Posterior cingulate gyrus (tissue), 11 donors: ENCODE measurements at regions of chr16 and their contacts with region 1.

Region 1: GRCh38 chr16:49491771-49492761 is 118.5 kb downstream of the C16orf78 start:
- DNase-seq: peak in 9 of 10 donors; percentile 30 to 93 (median 60)

Region 2: GRCh38 chr16:49194537-49195236 is 297.4 kb before region 1 on chr16:
- intact Hi-C with region 1: no loop called
- DNase-seq: no peak

Region 3: DNA sequence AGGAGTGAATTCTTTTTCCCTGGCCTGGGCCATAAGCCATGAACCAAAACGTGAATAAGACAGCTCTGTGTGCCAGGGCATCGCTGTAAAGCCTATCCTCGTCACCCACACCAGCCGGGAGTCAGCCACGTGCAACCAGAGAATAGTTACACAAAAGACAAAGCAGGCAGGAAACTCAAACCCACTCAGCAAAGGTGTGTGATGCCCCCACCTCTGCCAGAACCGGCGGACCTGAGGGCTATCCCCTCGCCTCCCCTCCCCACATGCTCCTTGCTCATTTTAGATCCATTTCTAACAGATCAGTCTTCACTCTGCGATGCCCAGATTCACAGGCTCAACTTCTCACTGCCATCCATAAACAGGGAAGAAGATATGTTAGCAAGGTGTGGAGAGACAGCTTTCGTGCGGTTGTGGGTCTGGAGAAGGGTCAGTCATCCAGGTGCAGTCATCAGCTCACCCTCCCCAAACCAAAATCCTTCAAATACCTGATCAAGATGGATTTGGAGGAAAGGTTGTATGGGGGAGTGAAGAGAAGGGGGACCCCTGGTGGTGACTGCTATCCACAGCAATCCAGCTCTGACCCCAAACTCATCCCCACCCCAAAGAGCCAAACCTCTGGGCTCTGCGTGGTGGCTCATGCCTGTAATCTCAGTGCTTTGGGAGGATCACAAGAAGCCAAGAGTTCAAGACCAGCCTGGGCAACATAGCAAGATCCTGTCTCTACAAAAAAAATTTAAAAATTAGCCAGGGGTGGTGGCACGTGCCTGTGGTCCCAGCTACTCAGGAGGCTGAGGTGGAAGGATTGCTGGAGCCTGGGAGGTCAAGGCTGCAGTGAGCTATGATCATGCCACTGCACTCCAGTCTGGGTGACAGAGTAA is 100.7 kb after region 1 on chr16:
- intact Hi-C with region 1: loop called (anchors 5 kb)
- DNase-seq: peak in 4 of 10 donors; percentile 15 to 35 (median 26)

Region 4: DNA sequence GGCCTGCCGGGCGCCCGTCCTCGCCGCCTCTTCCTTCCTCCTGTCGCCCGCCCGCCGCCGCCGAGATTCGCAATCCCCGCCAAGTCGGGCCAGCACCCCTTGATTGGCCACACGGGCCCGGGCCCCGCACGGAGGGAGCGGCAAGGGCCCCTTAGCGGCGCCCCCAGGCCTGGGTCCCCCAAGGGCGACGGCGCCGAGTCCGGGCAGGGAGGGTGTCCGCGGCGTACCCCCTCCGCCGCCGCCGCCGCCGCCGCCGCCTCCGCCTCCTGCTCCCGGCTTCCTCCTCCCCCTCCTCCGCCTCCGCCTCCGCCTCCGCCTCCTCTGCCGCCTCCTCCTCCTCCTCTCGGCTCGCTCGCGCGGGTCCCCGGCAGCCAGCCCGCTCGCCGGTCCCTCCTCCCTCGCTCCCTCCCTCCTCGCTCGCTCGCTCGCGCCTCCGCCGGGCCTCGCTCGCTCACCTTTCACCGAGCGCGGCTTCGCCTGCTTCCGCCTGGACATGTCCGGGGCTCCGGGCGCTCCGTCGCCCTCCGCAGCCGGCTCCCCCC is 363.3 kb after region 1 on chr16:
- intact Hi-C with region 1: loop called (anchors 2 kb)
- DNase-seq: peak; percentile 47 to 94 (median 70)